ENCODE measurements at regions of chr19 and their contacts with region 1.

Region 1: DNA sequence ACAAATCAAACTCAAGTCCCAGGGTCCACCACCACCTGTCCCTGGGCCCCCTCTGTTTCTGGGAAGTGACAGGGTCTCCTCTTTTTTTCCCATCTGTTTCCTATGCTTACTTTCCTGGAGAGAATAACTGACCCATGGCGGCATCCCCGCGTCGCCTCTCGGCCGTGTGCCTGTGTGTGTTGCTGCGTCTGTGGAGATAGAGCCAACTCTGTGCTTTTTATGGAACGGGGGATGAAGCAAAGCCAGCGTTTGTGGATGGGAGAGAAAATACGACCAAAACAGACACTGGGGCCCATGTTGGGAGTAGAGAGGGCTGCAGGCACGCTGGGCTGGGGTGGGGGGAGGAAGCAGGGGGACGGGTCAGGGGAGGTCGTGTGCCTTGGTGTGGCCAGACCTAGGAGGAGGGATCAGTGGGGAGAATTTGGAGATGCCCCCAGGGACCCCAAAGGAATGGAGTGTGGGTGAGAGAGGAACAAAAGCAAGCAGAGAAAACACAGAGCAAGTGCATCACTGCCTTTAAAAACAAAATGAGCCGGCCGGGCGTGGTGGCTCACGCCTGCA is 16.6 kb downstream of the PLK5 start:
- DNase-seq: peak; percentile 31 to 53
- H3K4me3 ChIP-seq: no peak overlapping the region
- H3K27ac ChIP-seq: peak overlapping the region; percentile 15 to 73
- H3K4me1 ChIP-seq: peaks cover 0 to 5% of the 10 kb centered on the region in 2 donors
- H3K27me3 ChIP-seq: no peaks in the 10 kb centered on the region
- CTCF ChIP-seq: no peak
- POLR2A ChIP-seq: no peak

Region 2: GRCh38 chr19:1470203-1471009 is 70.0 kb before region 1 on chr19:
- intact Hi-C with region 1: no loop called
- DNase-seq: no peak
- H3K4me3 ChIP-seq: peak overlapping the region; percentile 8 to 35
- H3K27ac ChIP-seq: no peak overlapping the region
- H3K4me1 ChIP-seq: peaks cover 12 to 53% of the 10 kb centered on the region in 2 donors
- H3K27me3 ChIP-seq: peaks cover 32 to 44% of the 10 kb centered on the region in 2 donors
- CTCF ChIP-seq: no peak
- POLR2A ChIP-seq: no peak

Region 3: GRCh38 chr19:1577090-1577928 is 36.9 kb after region 1 on chr19:
- intact Hi-C with region 1: no loop called
- DNase-seq: no peak
- H3K4me3 ChIP-seq: no peak overlapping the region
- H3K27ac ChIP-seq: no peak overlapping the region
- H3K4me1 ChIP-seq: no peaks in the 10 kb centered on the region
- H3K27me3 ChIP-seq: no peaks in the 10 kb centered on the region
- CTCF ChIP-seq: no peak
- POLR2A ChIP-seq: no peak

Region 4: DNA sequence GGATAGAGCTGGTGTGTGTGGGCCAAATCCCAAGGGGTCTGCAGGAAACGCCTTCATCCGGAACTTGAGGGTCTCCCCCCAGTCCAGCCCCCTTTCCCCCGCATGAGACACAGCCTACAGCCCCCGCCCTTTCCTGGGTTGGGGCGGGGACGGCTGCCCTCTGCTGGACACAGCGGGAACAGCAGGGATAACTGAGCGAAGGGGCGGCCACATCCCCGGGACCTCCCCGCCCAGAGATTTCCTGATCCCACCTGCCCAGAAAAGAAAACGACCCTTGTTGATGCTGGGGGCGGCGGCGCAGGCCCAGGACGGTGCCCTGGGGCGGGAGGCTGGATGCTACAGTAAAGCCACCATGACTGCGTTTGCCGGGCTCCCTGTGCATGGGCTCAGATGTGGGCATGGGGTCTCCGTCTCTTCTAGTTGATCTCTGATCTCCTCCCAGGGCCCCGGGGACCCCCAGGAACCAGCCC is 227.1 kb after region 1 on chr19:
- intact Hi-C with region 1: loop called (anchors 10 kb)
- DNase-seq: peak in 1 of 2 donors; percentile 39
- H3K4me3 ChIP-seq: no peak overlapping the region
- H3K27ac ChIP-seq: no peak overlapping the region
- H3K4me1 ChIP-seq: no peaks in the 10 kb centered on the region
- H3K27me3 ChIP-seq: peaks cover 10 to 64% of the 10 kb centered on the region in 2 donors
- CTCF ChIP-seq: peak; percentile 83 to 91 (median 83)
- POLR2A ChIP-seq: no peak

Measured in uterus (tissue), 4 donors.